Colonic mucosa (tissue), 4 donors: ENCODE measurements at regions of chr22 and their contacts with region 1.

Region 1: DNA sequence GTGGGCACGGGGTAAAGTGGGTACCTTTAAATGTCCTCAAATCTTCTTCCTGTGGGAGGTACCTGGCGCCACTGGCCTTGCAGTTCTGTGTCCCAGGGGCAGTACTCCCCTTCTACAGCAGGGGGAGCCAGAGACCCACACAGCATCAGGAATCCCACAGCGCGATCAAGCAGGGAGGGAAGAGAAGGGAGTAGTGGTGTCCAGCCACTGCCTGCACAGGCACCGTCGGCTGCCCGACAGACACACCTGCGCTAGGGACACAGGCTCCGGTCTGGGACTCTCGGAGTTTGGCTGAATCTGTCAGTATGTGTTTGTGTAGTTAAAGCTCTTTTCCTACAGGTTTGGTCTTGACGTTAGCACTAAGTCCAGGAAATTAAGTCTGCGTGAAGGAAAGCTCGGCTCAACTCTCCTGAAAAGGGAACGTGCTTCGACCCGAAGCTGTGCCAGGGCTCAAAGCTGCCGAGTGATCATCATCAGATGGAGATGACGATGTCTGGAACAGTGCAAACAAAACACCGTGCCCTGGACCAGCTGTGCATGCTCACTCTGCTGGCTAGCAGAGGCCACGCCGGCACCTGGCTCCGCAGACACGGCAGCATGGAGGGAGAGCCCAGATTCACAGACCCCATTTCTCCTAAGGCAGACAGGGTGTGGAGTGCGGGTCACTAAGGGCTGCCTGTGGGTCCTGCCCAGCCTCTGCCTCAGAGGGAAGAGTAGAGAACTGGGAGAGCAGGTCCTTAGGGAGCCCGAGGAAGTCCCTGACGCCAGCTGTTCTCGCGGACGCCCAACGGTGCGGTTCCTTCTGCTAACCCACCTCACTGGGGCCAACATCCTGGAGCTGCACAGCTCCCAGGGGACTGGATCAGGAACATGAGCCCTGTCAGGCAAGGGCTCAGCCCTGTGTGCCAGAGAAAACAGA is 56.0 kb upstream of the BID start:
- DNase-seq: peak; percentile 93
- H3K4me3 ChIP-seq: no peak overlapping the region
- H3K27ac ChIP-seq: peak overlapping the region; percentile 1
- H3K4me1 ChIP-seq: peaks cover 12% of the 10 kb centered on the region
- H3K27me3 ChIP-seq: no peaks in the 10 kb centered on the region
- CTCF ChIP-seq: peak; percentile 98

Region 2: GRCh38 chr22:17807578-17808360 is 22.5 kb before region 1 on chr22:
- intact Hi-C with region 1: no loop called
- DNase-seq: no peak
- H3K4me3 ChIP-seq: no peak overlapping the region
- H3K27ac ChIP-seq: no peak overlapping the region
- H3K4me1 ChIP-seq: no peaks in the 10 kb centered on the region
- H3K27me3 ChIP-seq: no peaks in the 10 kb centered on the region
- CTCF ChIP-seq: no peak

Region 3: GRCh38 chr22:17891481-17892167 is 61.3 kb after region 1 on chr22:
- intact Hi-C with region 1: loop called (anchors 2 kb)
- DNase-seq: peak; percentile 86
- H3K4me3 ChIP-seq: no peak overlapping the region
- H3K27ac ChIP-seq: peak overlapping the region; percentile 82
- H3K4me1 ChIP-seq: peaks cover 10% of the 10 kb centered on the region
- H3K27me3 ChIP-seq: no peaks in the 10 kb centered on the region
- CTCF ChIP-seq: peak; percentile 47

Region 4: DNA sequence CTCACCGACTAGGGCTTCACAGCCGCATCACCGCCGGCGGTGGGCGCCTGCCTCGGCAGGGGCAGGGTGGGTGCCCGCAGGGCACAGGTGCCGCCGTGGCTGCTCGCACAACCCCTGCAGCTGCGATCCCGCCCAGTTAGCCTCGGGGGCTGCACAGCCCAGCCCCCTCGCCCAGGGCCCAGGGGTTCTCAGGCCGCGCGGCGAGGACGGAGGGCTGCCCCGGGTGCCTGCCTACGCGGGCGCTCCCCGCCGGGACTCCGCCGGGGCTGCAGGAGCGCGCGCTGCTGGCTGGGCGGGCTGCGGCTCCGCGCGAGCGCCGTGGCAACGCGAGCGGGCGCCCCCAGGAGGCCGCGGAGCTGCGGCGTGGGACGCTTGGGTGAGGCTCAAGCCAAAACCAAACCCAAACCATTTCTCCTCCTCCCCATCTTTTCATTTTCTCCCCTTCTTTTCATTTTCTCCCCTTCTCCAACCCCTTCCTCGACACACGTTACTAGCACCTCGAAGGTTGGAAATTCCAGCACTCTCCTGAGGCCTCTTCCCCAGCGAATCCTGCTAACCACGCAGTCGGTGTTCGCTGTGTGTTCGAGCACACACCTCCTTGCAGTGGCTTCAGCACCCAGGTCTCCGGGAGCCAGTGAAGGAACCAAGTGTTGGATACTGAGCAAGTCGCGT is 194.1 kb after region 1 on chr22 and contains the start of gene MICAL3:
- intact Hi-C with region 1: loop called (anchors 5 kb)
- DNase-seq: peak; percentile 68
- H3K4me3 ChIP-seq: peak within 1 kb of the TSS; percentile 71
- H3K27ac ChIP-seq: peak within 1 kb of the TSS; percentile 82
- H3K4me1 ChIP-seq: peaks cover 4% of the 10 kb centered on the region
- H3K27me3 ChIP-seq: no peaks in the 10 kb centered on the region
- CTCF ChIP-seq: peak; percentile 16
- total RNA-seq, gene MICAL3: 72.5 to 84.5 TPM